CD4-positive, alpha-beta T cell (primary cell): ENCODE measurements at regions of chr3 and their contacts with region 1.

Region 1: DNA sequence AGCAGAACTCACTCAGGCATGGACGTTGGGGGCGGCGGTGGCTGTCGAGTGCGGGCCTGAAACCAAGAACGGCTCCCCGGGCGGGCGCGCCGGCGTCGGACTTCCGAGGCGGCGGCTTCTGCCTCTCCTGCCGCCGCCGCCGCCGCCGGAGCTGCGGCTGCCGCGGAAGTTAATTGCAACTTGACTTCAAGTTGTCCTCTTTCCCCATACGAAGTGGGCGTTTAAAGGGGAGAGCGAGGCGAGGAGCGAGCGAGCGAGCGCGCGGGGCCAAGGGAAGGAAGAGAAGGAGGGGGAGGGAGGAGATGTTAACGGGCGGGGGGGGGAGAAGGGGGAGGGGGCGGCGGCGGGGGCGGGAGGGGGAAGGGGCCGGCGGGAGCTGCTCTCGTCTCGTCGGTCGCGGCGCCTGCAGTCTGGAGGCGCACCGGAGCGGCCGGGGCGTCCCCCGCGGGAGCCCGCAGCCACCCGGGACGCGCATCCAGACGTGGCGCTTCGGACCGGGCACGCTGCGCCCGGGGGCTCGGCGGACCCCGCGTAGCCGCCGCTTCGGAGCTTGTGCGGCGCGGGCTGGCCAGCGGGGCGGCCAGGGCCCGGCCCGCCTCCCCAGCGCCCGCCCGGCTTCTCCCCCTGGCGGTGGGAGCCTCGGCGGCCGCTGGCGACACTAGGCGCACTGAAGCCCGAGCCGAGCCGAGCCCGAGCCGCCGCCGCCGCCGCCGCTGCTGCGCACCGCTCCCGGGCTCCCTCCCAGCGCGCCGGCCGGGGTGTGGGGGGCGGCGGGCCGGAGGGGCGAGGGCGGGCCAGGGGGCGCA is 19.7 kb upstream of the SATB1 start:
- DNase-seq: peak; percentile 61 to 91 (median 76)
- ATAC-seq: peak; percentile 60
- H3K4me3 ChIP-seq: peak overlapping the region; percentile 80
- H3K4me3 Mint-ChIP-seq: peak overlapping the region; percentile 96
- H3K27ac ChIP-seq: peak overlapping the region; percentile 75 to 86
- H3K27ac Mint-ChIP-seq: peak overlapping the region; percentile 97
- H3K4me1 ChIP-seq: peaks cover 24% of the 10 kb centered on the region
- H3K4me1 Mint-ChIP-seq: peaks cover 62% of the 10 kb centered on the region
- H3K27me3 ChIP-seq: no peaks in the 10 kb centered on the region
- H3K27me3 Mint-ChIP-seq: no peaks in the 10 kb centered on the region
- CTCF ChIP-seq: no peak

Region 2: GRCh38 chr3:18424729-18425640 is 19.8 kb before region 1 on chr3 and contains the start of gene SATB1:
- CTCF ChIA-PET with region 1: interaction called, 15 read pairs
- POLR2A ChIA-PET with region 1: interaction called, 152 read pairs
- intact Hi-C with region 1: loop called (anchors 1 kb)
- DNase-seq: peak; percentile 50 to 82 (median 67)
- ATAC-seq: peak; percentile 33
- H3K4me3 ChIP-seq: peak within 1 kb of the TSS; percentile 90
- H3K4me3 Mint-ChIP-seq: peak within 1 kb of the TSS; percentile 98
- H3K27ac ChIP-seq: peak within 1 kb of the TSS; percentile 74 to 94
- H3K27ac Mint-ChIP-seq: peak within 1 kb of the TSS; percentile 96
- H3K4me1 ChIP-seq: peaks cover 29% of the 10 kb centered on the region
- H3K4me1 Mint-ChIP-seq: peaks cover 81% of the 10 kb centered on the region
- H3K27me3 ChIP-seq: no peaks in the 10 kb centered on the region
- H3K27me3 Mint-ChIP-seq: no peaks in the 10 kb centered on the region
- CTCF ChIP-seq: no peak
- total RNA-seq, gene SATB1: 390 to 393 TPM

Region 3: DNA sequence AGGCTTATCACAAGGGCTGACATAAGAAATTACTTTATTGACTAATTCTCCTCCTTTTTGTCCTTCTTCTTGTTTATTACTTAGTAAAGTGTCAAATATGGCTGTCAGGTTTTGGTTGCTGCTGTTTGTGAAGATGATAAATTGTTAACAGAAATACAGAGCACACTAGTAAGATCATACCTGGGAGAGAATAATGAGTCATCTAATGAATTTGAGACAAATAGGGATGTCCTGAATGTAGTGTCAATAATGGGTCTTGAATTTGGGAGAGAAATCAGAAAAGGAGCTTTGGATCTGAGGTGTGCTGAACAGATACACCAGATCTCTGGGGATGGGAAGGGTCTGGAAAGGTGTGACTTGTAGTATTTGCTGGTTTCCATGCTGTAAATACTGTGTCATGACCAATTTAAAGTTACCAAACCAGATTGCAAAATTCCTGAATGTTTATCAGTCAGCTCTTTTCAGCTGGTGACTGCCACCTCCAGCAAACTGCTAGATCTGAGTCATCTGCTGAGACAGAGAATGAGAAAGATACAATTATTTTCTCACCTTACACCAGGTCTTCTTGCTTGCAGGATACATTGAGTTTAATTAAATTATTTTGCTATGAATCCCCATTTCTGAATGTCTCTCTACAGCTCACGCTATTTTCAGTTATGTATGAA is 57.0 kb after region 1 on chr3:
- CTCF ChIA-PET with region 1: no interaction called
- POLR2A ChIA-PET with region 1: interaction called, 4 read pairs
- intact Hi-C with region 1: loop called in 1 of 2 experiments (anchors 5 kb)
- DNase-seq: no peak
- ATAC-seq: no peak
- H3K4me3 ChIP-seq: no peak overlapping the region
- H3K4me3 Mint-ChIP-seq: no peak overlapping the region
- H3K27ac ChIP-seq: no peak overlapping the region
- H3K27ac Mint-ChIP-seq: no peak overlapping the region
- H3K4me1 ChIP-seq: no peaks in the 10 kb centered on the region
- H3K4me1 Mint-ChIP-seq: peaks cover 49% of the 10 kb centered on the region
- H3K27me3 ChIP-seq: no peaks in the 10 kb centered on the region
- H3K27me3 Mint-ChIP-seq: no peaks in the 10 kb centered on the region
- CTCF ChIP-seq: no peak

Region 4: GRCh38 chr3:18740631-18741583 is 296.1 kb after region 1 on chr3:
- CTCF ChIA-PET with region 1: interaction called, 3 read pairs
- POLR2A ChIA-PET with region 1: interaction called, 7 read pairs
- intact Hi-C with region 1: loop called in 1 of 2 experiments (anchors 2 kb)
- DNase-seq: peak; percentile 15 to 92 (median 42)
- ATAC-seq: peak; percentile 76
- H3K4me3 ChIP-seq: peak overlapping the region; percentile 28
- H3K4me3 Mint-ChIP-seq: peak overlapping the region; percentile 76
- H3K27ac ChIP-seq: peak overlapping the region; percentile 46 to 87
- H3K27ac Mint-ChIP-seq: peak overlapping the region; percentile 90
- H3K4me1 ChIP-seq: peaks cover 38% of the 10 kb centered on the region
- H3K4me1 Mint-ChIP-seq: peaks cover 87% of the 10 kb centered on the region
- H3K27me3 ChIP-seq: no peaks in the 10 kb centered on the region
- H3K27me3 Mint-ChIP-seq: no peaks in the 10 kb centered on the region
- CTCF ChIP-seq: no peak

Region 5: DNA sequence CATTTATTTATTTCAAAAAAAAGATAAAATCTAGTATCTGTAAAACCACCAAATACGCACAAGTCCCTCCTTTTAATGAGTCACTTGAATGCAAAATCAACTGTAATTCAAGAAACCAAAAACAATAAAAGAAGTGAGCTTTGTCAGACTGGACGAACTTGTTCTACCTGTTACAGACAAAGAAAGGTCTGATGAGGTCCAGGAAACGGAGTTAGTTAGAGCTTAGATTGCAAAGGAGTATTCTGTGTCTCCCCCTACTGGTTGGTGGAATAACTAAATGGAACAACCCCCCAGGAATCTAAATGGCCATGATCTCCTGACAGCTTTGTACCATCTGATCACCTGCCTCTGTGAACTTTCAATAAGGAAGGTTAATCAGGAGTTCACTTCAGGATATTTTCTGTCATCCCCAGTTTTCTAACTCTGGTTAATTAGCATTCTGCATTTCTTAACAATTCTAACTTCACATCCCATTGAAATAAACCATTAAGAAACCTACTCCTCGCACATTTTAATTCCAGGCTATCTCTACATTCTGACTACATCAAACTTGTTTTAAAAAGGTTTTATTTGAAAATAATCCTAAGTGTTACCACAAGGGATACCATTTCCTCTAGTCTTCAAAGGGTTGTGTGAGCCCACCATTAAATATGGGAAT is 313.4 kb after region 1 on chr3:
- CTCF ChIA-PET with region 1: interaction called, 5 read pairs
- POLR2A ChIA-PET with region 1: interaction called, 11 read pairs
- intact Hi-C with region 1: loop called (anchors 1 to 2 kb)
- DNase-seq: peak in 7 of 14 experiments; percentile 3 to 90 (median 47)
- ATAC-seq: peak; percentile 97
- H3K4me3 ChIP-seq: no peak overlapping the region
- H3K4me3 Mint-ChIP-seq: peak overlapping the region; percentile 5
- H3K27ac ChIP-seq: no peak overlapping the region
- H3K27ac Mint-ChIP-seq: peak overlapping the region; percentile 21
- H3K4me1 ChIP-seq: no peaks in the 10 kb centered on the region
- H3K4me1 Mint-ChIP-seq: peaks cover 56% of the 10 kb centered on the region
- H3K27me3 ChIP-seq: no peaks in the 10 kb centered on the region
- H3K27me3 Mint-ChIP-seq: no peaks in the 10 kb centered on the region
- CTCF ChIP-seq: peak; percentile 83

Region 6: GRCh38 chr3:19256313-19256712 is 811.5 kb after region 1 on chr3:
- CTCF ChIA-PET with region 1: no interaction called
- POLR2A ChIA-PET with region 1: no interaction called
- intact Hi-C with region 1: no loop called
- DNase-seq: no peak
- ATAC-seq: no peak
- H3K4me3 ChIP-seq: no peak overlapping the region
- H3K4me3 Mint-ChIP-seq: no peak overlapping the region
- H3K27ac ChIP-seq: no peak overlapping the region
- H3K27ac Mint-ChIP-seq: no peak overlapping the region
- H3K4me1 ChIP-seq: no peaks in the 10 kb centered on the region
- H3K4me1 Mint-ChIP-seq: no peaks in the 10 kb centered on the region
- H3K27me3 ChIP-seq: no peaks in the 10 kb centered on the region
- H3K27me3 Mint-ChIP-seq: no peaks in the 10 kb centered on the region
- CTCF ChIP-seq: no peak